ENCODE measurements at regions of chr7 and their contacts with region 1.

Region 1: DNA sequence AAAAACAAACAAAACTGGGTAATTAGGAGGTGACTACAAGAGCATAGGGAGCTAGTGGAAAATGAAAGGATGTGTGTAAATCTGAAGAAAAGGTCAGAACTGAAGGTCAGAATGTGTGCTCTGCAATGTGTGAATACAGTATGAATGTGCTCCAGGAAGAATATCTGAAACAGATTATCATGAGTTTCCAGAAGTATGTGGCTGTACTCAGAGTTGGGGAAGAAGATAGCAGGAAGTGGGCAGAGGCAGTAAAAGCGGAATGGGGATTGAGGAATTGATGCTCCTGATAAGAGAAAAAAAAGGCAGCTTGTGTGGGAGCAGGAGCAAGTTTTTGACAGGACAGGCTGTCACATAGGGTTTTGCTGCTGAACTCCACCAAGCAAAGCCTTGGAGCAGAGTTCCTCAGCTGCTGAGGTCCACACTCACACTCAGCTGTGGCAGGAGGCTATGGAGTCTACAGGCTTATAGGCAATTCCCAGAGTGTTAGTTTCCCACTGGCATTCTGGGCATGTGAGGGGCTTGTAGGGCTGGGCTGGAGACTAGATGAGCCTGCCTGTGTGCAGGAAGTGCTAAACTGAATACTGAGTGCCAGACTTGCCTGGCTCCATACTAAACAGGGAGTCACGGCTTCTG is 22.9 kb downstream of the H2AZ2 start:
- DNase-seq: no peak
- H3K4me3 Mint-ChIP-seq: no peak overlapping the region
- H3K27ac Mint-ChIP-seq: peak overlapping the region; percentile 9
- H3K4me1 Mint-ChIP-seq: peaks cover 16% of the 10 kb centered on the region
- H3K27me3 Mint-ChIP-seq: no peaks in the 10 kb centered on the region

Region 2: DNA sequence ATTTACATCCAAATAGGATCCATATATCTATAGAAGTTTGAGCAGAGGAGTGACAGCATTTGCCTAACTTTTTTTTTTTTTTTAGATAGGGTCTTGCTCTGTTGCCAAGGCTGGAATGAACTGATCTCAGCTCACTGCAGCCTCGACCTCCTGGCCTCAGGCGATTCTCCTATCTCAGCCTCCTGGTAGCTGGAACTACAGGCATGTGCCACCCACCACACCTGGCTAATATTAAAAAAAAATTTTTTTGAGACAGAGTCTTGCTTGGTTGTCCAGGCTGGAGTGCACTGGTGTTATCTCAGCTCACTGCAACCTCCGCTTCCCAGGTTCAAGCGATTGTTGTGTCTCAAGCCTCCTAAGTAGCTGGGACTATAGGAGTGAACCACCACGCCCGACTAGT is 13.4 kb before region 1 on chr7:
- CTCF ChIA-PET with region 1: interaction called, 10 read pairs
- POLR2A ChIA-PET with region 1: no interaction called
- DNase-seq: no peak
- H3K4me3 Mint-ChIP-seq: no peak overlapping the region
- H3K27ac Mint-ChIP-seq: no peak overlapping the region
- H3K4me1 Mint-ChIP-seq: peaks cover 4% of the 10 kb centered on the region
- H3K27me3 Mint-ChIP-seq: no peaks in the 10 kb centered on the region

Region 3: GRCh38 chr7:44897309-44897708 is 72.3 kb after region 1 on chr7:
- CTCF ChIA-PET with region 1: no interaction called
- POLR2A ChIA-PET with region 1: no interaction called
- DNase-seq: no peak
- H3K4me3 Mint-ChIP-seq: no peak overlapping the region
- H3K27ac Mint-ChIP-seq: no peak overlapping the region
- H3K4me1 Mint-ChIP-seq: peaks cover 11% of the 10 kb centered on the region
- H3K27me3 Mint-ChIP-seq: no peaks in the 10 kb centered on the region

Region 4: DNA sequence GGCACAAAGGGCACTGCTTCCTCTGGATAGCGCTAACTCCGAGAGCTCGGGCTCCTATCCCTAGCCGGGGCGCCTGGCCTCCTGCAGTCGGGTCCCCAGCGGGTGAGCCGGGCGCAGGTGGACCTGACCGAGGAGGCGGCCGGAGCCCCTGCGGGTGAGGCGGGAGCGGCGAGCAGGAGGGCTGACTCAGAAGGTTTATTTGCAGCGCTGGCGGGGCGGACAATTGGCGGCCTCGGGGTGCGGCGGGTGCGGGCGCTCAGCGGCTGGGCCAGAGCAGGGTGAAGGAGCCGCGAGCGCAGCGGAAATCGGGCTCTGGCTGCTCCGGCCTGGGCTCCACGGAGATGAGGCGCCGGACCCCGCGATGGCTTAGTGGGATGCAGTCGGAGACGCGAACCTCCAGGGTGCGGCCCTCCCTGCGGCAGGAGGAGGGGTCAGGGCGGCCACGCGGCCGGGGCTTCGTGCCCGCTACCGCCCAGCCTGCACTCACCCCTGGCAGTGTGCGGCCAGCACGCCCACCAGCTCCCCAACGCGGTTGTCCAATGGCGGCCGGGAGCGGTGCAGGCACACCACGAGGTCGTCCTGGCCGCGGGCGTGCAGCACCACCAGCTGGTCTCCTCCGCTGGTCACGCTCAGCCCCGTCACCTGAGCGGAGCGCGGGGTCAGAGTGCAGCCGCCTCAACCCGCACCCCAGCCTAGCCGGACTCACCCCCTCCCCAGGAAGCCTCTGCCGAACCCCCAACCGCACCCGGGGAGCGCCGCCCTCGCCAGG is 137.7 kb after region 1 on chr7:
- CTCF ChIA-PET with region 1: no interaction called
- POLR2A ChIA-PET with region 1: no interaction called
- DNase-seq: no peak
- H3K4me3 Mint-ChIP-seq: no peak overlapping the region
- H3K27ac Mint-ChIP-seq: no peak overlapping the region
- H3K4me1 Mint-ChIP-seq: peaks cover 23% of the 10 kb centered on the region
- H3K27me3 Mint-ChIP-seq: no peaks in the 10 kb centered on the region

Measured in activated CD4-positive, alpha-beta memory T cell treated with anti-CD3 and anti-CD28 coated beads, Interleukin-2, amount 10 ng/mL, durations not matched to agents 7 days and 5 days (primary cell).